ENCODE measurements at regions of chr5 and their contacts with region 1.

Region 1: DNA sequence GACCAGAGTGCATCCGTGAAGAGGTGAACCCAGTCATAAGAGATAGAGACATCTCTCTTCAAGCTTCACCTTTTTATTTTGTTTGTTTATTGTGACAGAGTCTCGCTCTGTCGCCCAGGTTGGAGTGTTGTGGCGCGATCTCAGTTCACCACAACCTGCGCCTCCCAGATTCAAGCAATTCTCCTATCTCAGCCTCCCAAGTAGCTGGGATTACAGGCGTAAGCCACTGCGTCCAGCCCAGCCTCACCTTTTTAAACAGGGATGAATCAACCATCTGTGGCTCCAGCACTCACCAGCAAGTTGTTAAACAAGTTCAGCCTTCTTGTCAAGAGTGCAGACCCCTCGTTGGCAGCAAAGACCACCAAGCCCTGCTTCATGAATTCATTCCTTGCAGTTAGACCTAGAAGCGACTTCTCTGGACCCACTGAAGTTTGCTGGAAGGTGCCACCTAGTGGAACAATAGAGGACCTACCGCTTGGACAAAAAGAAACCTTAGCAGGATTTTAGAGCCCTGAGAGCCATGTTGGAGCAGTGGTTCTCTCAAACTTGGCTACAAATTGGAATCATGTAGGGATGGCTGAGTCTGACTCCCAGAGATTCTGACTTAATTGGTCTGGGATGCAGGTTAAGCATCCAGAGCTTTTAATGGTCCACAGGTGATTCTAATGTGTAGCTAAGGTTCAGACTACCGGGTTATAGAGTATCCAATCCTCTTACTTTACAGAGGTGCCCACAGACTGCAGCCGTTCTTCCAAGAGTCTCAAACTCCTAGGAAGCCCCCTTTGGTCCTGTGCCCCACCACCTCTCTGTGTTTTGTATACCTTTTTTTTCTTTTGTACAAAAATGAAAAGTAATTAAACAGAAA is 10.5 kb upstream of the GALNT10 start:
- DNase-seq: no peak
- H3K4me3 ChIP-seq: no peak overlapping the region
- CTCF ChIP-seq: peak; percentile 74

Region 2: GRCh38 chr5:152532714-152533113 is 1647.4 kb before region 1 on chr5:
- CTCF ChIA-PET with region 1: interaction called, 10 read pairs
- POLR2A ChIA-PET with region 1: no interaction called
- DNase-seq: peak; percentile 24
- H3K4me3 ChIP-seq: no peak overlapping the region
- CTCF ChIP-seq: peak; percentile 13

Region 3: GRCh38 chr5:153974131-153974812 is 205.8 kb before region 1 on chr5:
- CTCF ChIA-PET with region 1: interaction called, 58 read pairs
- POLR2A ChIA-PET with region 1: no interaction called
- DNase-seq: no peak
- H3K4me3 ChIP-seq: no peak overlapping the region
- CTCF ChIP-seq: peak; percentile 63

Region 4: GRCh38 chr5:154058055-154059038 is 121.7 kb before region 1 on chr5:
- CTCF ChIA-PET with region 1: interaction called, 254 read pairs
- POLR2A ChIA-PET with region 1: no interaction called
- DNase-seq: no peak
- H3K4me3 ChIP-seq: no peak overlapping the region
- CTCF ChIP-seq: no peak

Region 5: GRCh38 chr5:154072414-154073171 is 107.5 kb before region 1 on chr5:
- CTCF ChIA-PET with region 1: interaction called, 254 read pairs
- POLR2A ChIA-PET with region 1: interaction called, 3 read pairs
- DNase-seq: no peak
- H3K4me3 ChIP-seq: no peak overlapping the region
- CTCF ChIP-seq: peak; percentile 92

Region 6: GRCh38 chr5:154103233-154103632 is 76.8 kb before region 1 on chr5:
- CTCF ChIA-PET with region 1: no interaction called
- POLR2A ChIA-PET with region 1: no interaction called
- DNase-seq: no peak
- H3K4me3 ChIP-seq: no peak overlapping the region
- CTCF ChIP-seq: no peak

Region 7: DNA sequence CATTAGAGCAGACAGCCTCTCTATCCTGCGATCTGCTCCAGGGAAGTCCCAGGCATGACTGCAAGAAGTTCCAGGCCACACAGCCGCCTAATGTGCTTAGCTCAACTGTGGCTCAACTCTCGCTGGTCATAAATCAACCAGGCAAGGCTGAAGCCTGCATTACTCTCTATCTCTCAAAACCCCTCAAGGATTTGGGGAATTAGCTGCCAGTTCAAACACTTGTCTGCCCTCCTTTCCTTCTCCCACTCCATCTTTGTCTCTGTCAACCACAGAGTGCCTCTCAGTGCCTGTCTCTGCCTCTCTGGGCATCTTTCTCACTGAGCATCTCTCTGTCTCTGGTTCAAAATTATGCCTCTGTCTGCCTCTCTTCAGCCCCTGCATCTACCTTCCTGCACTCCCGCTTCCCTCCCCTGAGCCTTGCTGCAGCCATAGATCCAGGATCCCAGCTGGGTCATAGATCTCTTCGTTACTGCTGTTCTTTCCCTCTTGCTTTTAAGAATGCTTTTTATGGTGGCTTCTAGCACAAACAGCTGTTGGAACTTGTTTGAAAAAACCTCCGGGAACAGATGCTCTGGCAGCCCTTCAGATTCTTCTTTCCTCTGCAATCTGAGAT is 17.4 kb before region 1 on chr5:
- CTCF ChIA-PET with region 1: interaction called, 11 read pairs
- POLR2A ChIA-PET with region 1: no interaction called
- DNase-seq: no peak
- H3K4me3 ChIP-seq: no peak overlapping the region
- CTCF ChIP-seq: no peak

Region 8: DNA sequence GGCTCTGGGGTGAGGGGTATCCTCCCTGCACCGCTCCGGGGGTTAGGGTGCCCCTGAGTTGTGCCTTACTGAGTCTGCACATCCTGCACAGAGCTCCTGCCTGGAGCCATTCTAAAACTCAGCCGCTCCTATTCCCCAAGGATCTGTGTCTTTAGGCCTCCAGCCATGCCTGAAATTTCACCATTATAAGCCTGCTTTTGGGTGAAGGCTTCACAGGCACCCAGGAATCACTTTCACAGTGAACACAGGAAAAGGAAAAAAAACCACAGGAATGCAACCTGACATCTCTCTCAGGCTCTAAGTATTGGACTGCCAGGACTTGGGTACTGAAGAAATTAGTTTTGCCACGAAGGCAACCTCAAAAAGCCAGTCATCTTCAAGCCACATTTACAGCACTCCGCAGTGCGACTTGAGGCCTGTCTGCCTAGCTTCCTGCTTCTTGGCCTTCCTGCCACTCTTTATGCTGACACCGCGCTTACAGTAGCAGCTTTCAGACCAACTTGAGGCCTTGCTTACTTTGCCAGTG is 41.4 kb after region 1 on chr5:
- CTCF ChIA-PET with region 1: no interaction called
- POLR2A ChIA-PET with region 1: no interaction called
- DNase-seq: peak; percentile 95
- H3K4me3 ChIP-seq: no peak overlapping the region
- CTCF ChIP-seq: no peak

Region 9: GRCh38 chr5:154405078-154405792 is 225.2 kb after region 1 on chr5:
- CTCF ChIA-PET with region 1: interaction called, 32 read pairs
- POLR2A ChIA-PET with region 1: no interaction called
- DNase-seq: no peak
- H3K4me3 ChIP-seq: peak overlapping the region; percentile 32; the same call in 1 of the 2 replicates
- CTCF ChIP-seq: peak; percentile 98